ENCODE measurements at regions of chr14 and their contacts with region 1.

Region 1: DNA sequence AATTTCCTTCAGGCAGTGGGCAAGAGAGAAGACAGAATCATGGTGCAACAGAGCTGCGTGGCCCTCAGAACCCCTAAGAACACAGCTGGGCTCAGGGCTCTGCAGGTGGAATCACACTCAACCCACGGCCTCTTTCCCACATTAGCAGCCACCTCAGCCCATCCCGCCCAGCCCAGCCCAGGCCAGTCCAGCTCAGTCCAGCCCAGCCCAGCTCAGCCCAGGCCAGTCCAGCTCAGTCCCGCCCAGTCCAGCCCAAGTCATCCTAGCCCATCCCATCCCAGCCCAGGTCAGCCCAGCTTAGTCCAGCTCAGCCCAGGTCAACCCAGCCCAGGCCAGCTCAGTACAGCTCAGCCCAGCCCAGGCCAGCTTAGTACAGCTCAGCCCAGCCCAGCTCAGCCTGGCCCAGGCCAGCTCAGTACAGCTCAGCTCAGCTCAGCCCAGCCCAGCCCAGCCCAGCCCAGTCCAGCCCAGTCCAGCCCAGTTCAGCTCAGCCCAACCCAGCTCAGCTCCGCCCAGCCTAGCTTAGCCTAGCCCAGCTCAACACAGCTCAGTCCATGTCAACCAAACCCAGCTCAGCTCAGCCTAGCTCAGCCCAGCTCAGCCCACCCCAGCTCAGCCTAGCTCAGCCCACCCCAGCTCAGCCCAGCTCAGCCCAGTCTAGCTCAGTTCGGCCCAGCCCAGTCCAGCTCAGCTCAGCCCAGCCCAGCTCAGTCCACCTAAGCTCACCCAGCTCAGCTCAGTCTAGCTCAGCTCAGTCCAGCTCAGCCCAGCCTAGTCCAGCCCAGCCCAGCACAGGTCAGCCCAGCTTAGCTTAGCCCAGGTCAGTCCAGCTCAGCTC is 183.1 kb downstream of the TMEM121 start:
- DNase-seq: peak; percentile 22
- CTCF ChIP-seq: no peak

Region 2: DNA sequence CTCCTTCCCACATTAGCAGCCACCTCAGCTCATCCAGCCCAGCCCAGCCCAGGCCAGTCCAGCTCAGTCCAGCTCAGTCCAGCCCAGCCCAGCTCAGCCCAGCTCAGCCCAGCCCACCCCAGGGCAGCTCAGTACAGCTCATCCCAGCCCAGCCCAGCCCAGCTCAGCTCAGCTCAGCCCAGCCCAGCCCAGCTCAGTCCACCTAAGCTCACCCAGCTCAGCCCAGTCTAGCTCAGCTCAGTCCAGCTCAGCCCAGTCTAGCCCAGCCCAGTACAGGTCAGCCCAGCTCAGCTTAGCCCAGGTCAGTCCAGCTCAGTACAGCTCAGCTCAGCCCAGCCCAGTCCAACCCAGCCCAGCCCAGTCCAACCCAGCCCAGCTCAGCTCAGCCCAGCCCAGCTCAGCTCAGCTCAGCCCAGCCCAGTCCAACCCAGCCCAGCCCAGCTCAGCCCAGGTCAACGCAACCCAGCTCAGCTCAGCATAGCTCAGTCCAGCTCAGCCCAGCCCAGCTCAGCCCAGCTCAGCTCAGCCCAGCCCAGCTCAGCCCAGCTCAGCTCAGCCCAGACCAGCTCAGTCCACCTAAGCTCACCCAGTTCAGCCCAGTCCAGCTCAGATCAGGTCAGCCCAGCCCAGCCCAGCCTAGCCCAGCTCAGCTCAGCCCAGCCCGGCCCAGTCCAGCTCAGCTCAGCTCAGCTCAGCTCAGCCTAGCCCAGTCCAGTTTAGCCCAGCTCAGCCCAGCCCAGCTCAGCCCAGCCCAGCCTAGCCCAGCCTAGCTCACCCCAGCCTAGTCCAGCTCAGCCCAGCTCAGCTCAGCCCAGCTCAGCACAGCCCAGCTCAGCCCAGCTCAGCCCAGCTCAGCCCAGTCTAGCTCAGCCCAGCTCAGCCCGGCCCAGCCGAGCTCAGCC is 120.1 kb before region 1 on chr14:
- in situ Hi-C with region 1: loop called (anchors 5 kb)
- DNase-seq: no peak
- CTCF ChIP-seq: no peak

Region 3: DNA sequence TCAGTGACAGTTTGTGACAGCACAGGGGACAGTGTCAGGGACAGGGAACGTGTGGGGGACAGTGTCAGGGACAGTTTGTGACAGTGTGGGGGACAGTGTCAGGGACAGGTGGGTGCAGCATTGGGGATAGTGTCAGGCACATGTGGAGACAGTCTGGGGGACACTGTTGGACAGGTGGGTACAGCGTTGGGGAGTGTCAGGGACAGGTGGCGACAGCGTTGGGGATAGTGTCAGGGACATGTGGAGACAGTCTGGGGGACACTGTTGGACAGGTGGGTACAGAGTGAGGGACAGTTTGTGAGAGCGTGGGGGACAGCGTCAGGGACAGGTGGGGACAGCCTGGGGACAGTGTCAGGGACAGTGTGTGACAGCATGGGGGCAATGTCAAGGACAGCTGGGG is 43.1 kb before region 1 on chr14:
- in situ Hi-C with region 1: no loop called
- DNase-seq: no peak
- CTCF ChIP-seq: no peak

Region 4: GRCh38 chr14:105760691-105761346 is 51.3 kb after region 1 on chr14:
- in situ Hi-C with region 1: no loop called
- DNase-seq: no peak
- CTCF ChIP-seq: no peak

Region 5: GRCh38 chr14:106506881-106507305 is 797.4 kb after region 1 on chr14:
- in situ Hi-C with region 1: no loop called
- DNase-seq: no peak
- CTCF ChIP-seq: no peak

Measured in GM13976 (cell line).